Activated T-helper 1 cell treated with anti-CD3 and anti-CD28 coated beads, Interleukin-12 subunit alpha, Interleukin-12 subunit beta, Interleukin-2, Interleukin-4 antibody, amounts not matched to agents 30 ng/mL and 10 ng/mL and 1 ng/mL, durations not matched to agents 14 hours and 24 hours and 36 hours (primary cell): ENCODE measurements at regions of chr3 and their contacts with region 1.

Region 1: DNA sequence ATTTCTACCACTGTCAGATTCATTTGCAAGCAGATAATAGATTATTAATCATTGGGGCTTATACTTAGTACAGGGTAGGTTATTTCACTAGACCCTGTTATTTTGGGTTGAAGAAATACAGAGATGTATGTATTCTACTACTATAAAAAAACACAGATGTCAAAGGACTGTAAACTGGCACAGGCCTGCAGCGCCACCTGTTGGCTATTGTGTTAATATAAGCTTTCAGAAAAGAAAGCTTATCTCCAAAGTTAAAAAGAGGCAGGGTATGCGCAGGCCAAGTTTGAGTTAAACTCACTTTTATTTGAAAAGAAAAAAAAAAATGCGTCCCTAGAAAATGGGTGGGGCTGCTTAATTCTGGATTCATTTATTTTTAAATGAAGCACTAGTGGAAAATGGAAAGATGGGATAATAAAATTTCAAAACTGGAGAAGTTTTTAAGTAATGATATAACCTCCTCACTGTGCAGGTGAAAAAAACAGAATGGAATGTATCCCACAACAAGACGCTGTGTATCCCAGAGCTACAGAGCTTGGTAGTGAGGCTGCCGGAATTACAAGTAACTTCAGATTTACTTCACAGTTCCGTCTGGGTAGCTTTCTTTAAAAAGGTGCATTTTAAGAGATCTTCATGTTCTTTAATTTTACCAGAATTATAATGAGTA is 407.2 kb upstream of the TGFBR2 start:
- DNase-seq: peak; percentile 31
- H3K4me3 Mint-ChIP-seq: no peak overlapping the region
- H3K27ac Mint-ChIP-seq: no peak overlapping the region
- H3K4me1 Mint-ChIP-seq: peaks cover 14% of the 10 kb centered on the region
- H3K27me3 Mint-ChIP-seq: no peaks in the 10 kb centered on the region

Region 2: DNA sequence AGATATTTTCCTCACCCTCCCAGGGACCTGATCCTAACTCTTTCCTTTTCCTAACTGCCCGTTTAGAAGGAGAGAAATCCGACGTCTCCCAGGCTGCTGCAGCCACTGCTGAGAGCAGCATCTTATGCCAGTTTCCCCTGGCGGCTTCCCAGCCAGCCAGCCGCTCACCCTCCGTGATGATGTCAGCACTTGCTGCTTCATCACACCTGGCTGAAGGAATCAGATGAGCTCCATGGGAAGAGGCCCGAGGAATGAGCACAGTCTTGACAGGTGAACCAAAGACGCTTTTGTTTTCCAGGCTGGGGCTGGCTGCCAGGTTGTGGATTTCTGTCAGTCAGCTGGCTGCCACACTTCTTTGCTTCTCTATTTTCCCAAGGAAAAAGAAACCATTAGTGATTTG is 1363.5 kb before region 1 on chr3:
- intact Hi-C with region 1: no loop called
- DNase-seq: no peak
- H3K4me3 Mint-ChIP-seq: no peak overlapping the region
- H3K27ac Mint-ChIP-seq: no peak overlapping the region
- H3K4me1 Mint-ChIP-seq: peaks cover 11% of the 10 kb centered on the region
- H3K27me3 Mint-ChIP-seq: no peaks in the 10 kb centered on the region

Region 3: DNA sequence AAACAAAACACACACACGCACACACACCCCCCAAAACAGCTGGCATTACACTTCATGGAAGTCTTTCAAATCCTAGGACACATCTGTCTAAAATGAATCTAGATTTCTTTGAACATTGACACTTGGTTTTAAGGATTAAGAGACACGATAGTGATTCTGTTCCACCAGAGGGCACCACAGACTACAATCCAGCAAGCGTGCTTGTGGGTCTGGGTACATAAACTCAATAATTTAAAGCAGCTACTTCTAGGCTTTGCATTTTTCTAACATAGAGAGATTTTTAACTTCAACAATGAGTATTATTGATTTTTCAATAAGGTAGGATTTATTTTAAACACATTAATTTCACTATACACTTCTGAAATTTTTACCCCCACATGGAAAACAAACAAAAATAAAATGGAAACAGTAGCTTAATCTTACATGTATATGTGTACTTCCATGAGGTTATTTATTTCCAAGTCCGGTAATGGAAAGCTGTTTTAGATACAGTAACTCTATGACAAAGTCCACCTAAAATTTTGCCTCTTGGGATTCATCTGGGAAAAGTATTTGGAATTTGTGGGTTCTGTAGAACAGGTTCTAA is 156.9 kb before region 1 on chr3:
- intact Hi-C with region 1: loop called (anchors 1 kb)
- DNase-seq: peak; percentile 20
- H3K4me3 Mint-ChIP-seq: no peak overlapping the region
- H3K27ac Mint-ChIP-seq: no peak overlapping the region
- H3K4me1 Mint-ChIP-seq: no peaks in the 10 kb centered on the region
- H3K27me3 Mint-ChIP-seq: peaks cover 13% of the 10 kb centered on the region

Region 4: GRCh38 chr3:30112902-30113484 is 86.2 kb before region 1 on chr3:
- intact Hi-C with region 1: loop called (anchors 1 kb)
- DNase-seq: no peak
- H3K4me3 Mint-ChIP-seq: no peak overlapping the region
- H3K27ac Mint-ChIP-seq: no peak overlapping the region
- H3K4me1 Mint-ChIP-seq: peaks cover 4% of the 10 kb centered on the region
- H3K27me3 Mint-ChIP-seq: peaks cover 12% of the 10 kb centered on the region